Ascending aorta (tissue), 2 donors: ENCODE measurements at regions of chr9 and their contacts with region 1.

Region 1: GRCh38 chr9:96418074-96418809 is at the start of gene ZNF367:
- DNase-seq: peak; percentile 96 to 99
- H3K4me3 ChIP-seq: peak within 1 kb of the TSS; percentile 77 to 92
- H3K27ac ChIP-seq: peak within 1 kb of the TSS; percentile 99
- H3K4me1 ChIP-seq: peaks cover 11 to 23% of the 10 kb centered on the region in 2 donors
- H3K27me3 ChIP-seq: no peaks in the 10 kb centered on the region
- CTCF ChIP-seq: no peak
- total RNA-seq, gene ZNF367: 3.9 TPM

Region 2: GRCh38 chr9:96449845-96450612 is 31.8 kb after region 1 on chr9 and contains the start of gene HABP4:
- intact Hi-C with region 1: loop called (anchors 1 kb)
- DNase-seq: peak; percentile 89 to 99
- H3K4me3 ChIP-seq: peak within 1 kb of the TSS; percentile 92 to 98
- H3K27ac ChIP-seq: peak within 1 kb of the TSS; percentile 94 to 98
- H3K4me1 ChIP-seq: peaks cover 0 to 35% of the 10 kb centered on the region in 2 donors
- H3K27me3 ChIP-seq: no peaks in the 10 kb centered on the region
- CTCF ChIP-seq: no peak
- total RNA-seq, gene HABP4: 26.9 TPM

Region 3: GRCh38 chr9:96523374-96523773 is 105.1 kb after region 1 on chr9:
- intact Hi-C with region 1: loop called (anchors 5 kb)
- DNase-seq: peak; percentile 27 to 94
- H3K4me3 ChIP-seq: peak overlapping the region; percentile 28 to 53
- H3K27ac ChIP-seq: peak overlapping the region; percentile 88 to 91
- H3K4me1 ChIP-seq: peaks cover 3 to 37% of the 10 kb centered on the region in 2 donors
- H3K27me3 ChIP-seq: no peaks in the 10 kb centered on the region
- CTCF ChIP-seq: no peak

Region 4: GRCh38 chr9:96581786-96582185 is 163.5 kb after region 1 on chr9:
- intact Hi-C with region 1: no loop called
- DNase-seq: no peak
- H3K4me3 ChIP-seq: no peak overlapping the region
- H3K27ac ChIP-seq: no peak overlapping the region
- H3K4me1 ChIP-seq: no peaks in the 10 kb centered on the region
- H3K27me3 ChIP-seq: no peaks in the 10 kb centered on the region
- CTCF ChIP-seq: no peak

Region 5: DNA sequence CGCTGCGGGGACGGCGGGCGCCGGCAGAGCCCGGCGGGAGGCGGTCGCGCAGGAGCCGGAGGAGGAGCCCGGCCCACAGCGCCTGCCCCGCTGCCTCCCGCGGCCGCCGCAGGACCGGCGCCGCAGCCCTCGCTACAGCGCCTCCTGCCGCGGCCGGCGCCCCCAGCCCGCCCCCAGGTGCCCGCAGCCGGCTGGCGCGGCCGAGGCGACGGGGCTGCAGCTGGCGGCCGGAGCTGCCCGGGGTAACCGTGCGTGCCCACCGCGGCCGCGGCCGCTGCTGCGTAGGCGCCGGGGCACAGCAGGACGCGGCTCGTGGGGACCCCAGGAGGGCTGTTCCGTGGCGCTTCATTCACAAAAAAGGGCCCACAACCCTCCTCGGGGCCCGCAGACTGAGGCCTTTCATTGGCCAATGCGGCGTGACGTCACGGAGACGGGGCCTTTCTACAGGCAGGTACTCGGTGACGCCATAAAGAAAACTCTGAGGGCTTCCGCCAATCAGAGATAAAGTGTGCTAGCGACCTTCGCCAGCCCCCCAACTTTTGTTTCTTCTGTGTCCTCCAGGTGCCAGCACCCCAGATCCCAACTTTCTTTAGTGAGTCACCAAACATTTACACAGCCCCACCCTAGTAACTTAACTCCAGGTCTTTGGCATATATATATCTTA is 201.4 kb after region 1 on chr9 and contains the start of gene CDC14B:
- intact Hi-C with region 1: loop called (anchors 2 kb)
- DNase-seq: peak; percentile 77 to 95
- H3K4me3 ChIP-seq: peak within 1 kb of the TSS; percentile 98
- H3K27ac ChIP-seq: peak within 1 kb of the TSS; percentile 91 to 93
- H3K4me1 ChIP-seq: no peaks in the 10 kb centered on the region
- H3K27me3 ChIP-seq: no peaks in the 10 kb centered on the region
- CTCF ChIP-seq: peak in 1 of 3 experiments; percentile 37
- total RNA-seq, gene CDC14B: 47.8 TPM